HCT116 (cell line): ENCODE measurements at regions of chr20 and their contacts with region 1.

Region 1: DNA sequence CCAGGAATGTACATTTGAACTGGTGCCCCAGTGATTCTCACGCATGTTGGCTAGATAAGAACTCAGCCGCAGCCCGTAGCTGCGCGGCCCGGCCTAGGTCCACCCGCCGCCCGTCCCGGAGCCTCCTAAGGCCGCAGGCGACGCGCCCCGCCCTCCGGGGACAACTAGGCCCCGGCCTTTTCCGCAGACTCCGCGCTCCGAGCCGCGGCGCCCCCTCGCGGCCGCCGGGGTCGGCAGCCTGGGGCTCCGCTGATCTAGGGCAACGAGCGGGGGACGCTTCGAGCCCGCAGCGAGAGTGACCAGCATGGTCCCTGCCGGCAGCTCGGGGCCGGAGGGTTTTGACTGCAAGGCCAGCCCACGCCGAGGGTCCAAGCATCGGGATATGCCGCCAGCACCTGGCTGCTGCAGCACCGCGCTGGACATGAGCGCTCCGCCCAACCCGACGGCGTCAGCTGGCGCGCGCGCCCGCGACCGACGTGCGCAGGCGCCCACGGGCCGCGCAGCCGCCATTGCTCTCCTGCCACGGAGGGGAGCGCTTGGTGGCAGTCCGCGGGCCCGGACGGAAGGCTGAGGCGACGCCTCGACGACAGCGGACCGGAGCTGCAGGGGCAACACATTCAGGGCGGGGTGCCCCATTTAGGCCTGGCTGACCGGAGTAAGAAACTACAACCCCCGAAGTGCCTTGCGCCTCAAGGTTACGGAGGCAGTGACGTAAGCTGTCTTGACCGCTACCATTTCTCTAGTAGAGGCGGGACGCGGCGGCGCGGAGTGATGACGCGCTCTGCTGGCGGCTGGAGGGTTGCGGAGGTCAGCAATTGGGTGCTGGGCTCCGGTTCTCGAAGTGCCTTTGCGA is at the start of gene AP5S1:
- DNase-seq: peak; percentile 97
- ATAC-seq: peak; percentile 82
- H3K4me3 ChIP-seq: peak within 1 kb of the TSS; percentile 70 to 82
- H3K27ac ChIP-seq: peak within 1 kb of the TSS; percentile 87
- H3K4me1 ChIP-seq: peaks cover 23 to 46% of the 10 kb centered on the region in 2 experiments
- H3K27me3 ChIP-seq: no peaks in the 10 kb centered on the region
- CTCF ChIP-seq: peak in 2 of 3 experiments; percentile 91 to 98; a peak in 4 of 6 replicates
- POLR2A ChIP-seq: peak; percentile 38
- RAD21 ChIP-seq: no peak
- total RNA-seq, gene AP5S1: 12.1 TPM

Region 2: GRCh38 chr20:3358676-3359340 is 461.5 kb before region 1 on chr20:
- CTCF ChIA-PET with region 1: no interaction called
- POLR2A ChIA-PET with region 1: no interaction called
- RAD21 ChIA-PET with region 1: no interaction called
- intact Hi-C with region 1: no loop called
- DNase-seq: no peak
- ATAC-seq: no peak
- H3K4me3 ChIP-seq: no peak overlapping the region
- H3K27ac ChIP-seq: no peak overlapping the region
- H3K4me1 ChIP-seq: no peaks in the 10 kb centered on the region
- H3K27me3 ChIP-seq: no peaks in the 10 kb centered on the region
- CTCF ChIP-seq: no peak
- POLR2A ChIP-seq: no peak
- RAD21 ChIP-seq: peak; percentile 19; the same call in 1 of the 2 replicates

Region 3: GRCh38 chr20:3767427-3768341 is 52.6 kb before region 1 on chr20 and contains the start of gene ADISSP:
- CTCF ChIA-PET with region 1: interaction called, 12 read pairs
- POLR2A ChIA-PET with region 1: interaction called, 3 read pairs
- RAD21 ChIA-PET with region 1: no interaction called
- intact Hi-C with region 1: no loop called
- DNase-seq: peak; percentile 95
- ATAC-seq: peak; percentile 92
- H3K4me3 ChIP-seq: peak within 1 kb of the TSS; percentile 84 to 91
- H3K27ac ChIP-seq: peak within 1 kb of the TSS; percentile 83
- H3K4me1 ChIP-seq: peaks cover 12 to 36% of the 10 kb centered on the region in 2 experiments
- H3K27me3 ChIP-seq: no peaks in the 10 kb centered on the region
- CTCF ChIP-seq: peak in 2 of 3 experiments; percentile 8 to 26; a peak in 2 of 6 replicates
- POLR2A ChIP-seq: peak; percentile 31
- RAD21 ChIP-seq: no peak
- total RNA-seq, gene ADISSP: 99.4 TPM

Region 4: DNA sequence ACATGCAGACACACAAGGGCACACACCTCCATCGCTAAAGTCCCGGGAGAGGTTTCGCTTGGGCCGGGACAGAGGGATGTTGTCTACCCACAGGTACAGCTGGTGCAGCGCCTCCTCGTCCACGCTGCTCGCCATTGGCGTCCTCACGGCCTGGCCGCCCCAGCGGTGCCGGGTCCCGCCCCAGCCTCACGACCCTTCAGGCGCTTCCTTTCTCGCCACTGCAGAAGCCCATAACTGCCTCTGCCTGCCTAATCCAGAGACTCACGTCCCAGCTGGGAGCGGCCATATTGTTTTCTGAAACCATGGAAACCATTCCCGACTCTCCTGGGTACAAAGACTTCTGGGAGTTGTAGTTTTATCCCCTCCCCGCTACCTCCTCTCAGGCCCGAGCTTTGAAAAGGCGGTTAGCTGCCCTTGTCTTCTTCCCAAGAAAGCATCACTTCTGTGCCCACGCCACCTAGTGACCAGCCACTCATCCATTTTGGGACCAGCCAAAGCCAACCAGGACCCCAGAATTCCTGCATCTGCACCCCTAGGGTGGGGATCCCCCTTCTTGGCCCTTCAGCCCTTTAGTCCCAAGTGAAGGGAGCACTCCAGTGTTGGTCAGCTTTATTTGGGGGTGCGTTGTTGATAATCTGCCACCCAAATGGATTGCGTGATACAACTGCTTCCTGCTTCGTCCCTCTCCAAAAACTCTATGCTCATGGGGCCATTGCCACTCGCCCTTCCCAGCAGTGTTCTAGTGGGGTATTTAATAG is 38.9 kb before region 1 on chr20 and contains the start of gene SPEF1:
- CTCF ChIA-PET with region 1: interaction called, 19 read pairs
- POLR2A ChIA-PET with region 1: interaction called, 16 read pairs
- RAD21 ChIA-PET with region 1: interaction called in 1 of 2 experiments, 6 read pairs
- intact Hi-C with region 1: no loop called
- DNase-seq: peak; percentile 92
- ATAC-seq: peak; percentile 90
- H3K4me3 ChIP-seq: peak within 1 kb of the TSS; percentile 55 to 64
- H3K27ac ChIP-seq: peak within 1 kb of the TSS; percentile 3; the same call in 1 of the 2 replicates
- H3K4me1 ChIP-seq: peaks cover 7 to 27% of the 10 kb centered on the region in 2 experiments; a peak in 3 of 4 replicates
- H3K27me3 ChIP-seq: no peaks in the 10 kb centered on the region
- CTCF ChIP-seq: peak; percentile 63 to 83 (median 69)
- POLR2A ChIP-seq: no peak
- RAD21 ChIP-seq: peak; percentile 66
- total RNA-seq, gene SPEF1: 0.93 TPM

Region 5: DNA sequence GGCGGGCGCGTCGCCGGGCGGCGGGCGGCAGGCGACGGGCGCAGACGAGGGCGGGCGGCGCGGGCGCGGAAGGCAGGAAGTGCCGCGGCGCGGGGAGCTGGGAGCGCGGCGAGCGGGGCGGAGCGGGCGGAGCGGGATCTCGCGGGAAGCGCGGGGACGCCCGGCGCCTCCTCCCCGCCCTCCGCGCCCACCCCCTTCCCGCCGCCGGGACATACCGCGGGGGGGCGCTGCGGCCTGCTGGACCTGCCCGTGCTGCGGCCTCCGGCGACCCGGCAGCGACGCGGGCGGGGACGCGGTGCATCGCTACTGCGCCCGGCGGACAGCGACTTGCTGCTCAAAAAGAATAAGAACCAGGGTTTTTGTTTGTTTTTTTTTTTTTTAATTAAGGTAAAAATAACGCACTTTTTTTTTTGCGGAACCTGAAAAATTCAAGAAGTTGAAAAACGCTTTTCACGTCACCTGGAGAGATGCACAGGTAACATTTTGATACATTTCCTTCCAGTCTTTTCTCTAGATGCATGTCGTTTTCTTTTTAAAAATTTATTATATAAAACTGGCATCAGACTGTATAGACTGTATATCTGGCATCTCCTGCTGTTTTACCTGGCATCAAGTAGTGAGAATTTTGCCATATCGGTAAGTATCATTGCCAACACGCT is 33.5 kb before region 1 on chr20 and contains the start of gene CENPB:
- CTCF ChIA-PET with region 1: interaction called, 19 read pairs
- POLR2A ChIA-PET with region 1: interaction called, 16 read pairs
- RAD21 ChIA-PET with region 1: interaction called, 6 to 7 read pairs
- intact Hi-C with region 1: loop called (anchors 1 kb)
- DNase-seq: peak; percentile 57
- ATAC-seq: peak; percentile 88
- H3K4me3 ChIP-seq: peak within 1 kb of the TSS; percentile 68 to 70
- H3K27ac ChIP-seq: peak within 1 kb of the TSS; percentile 81
- H3K4me1 ChIP-seq: peaks cover 25 to 40% of the 10 kb centered on the region in 2 experiments
- H3K27me3 ChIP-seq: no peaks in the 10 kb centered on the region
- CTCF ChIP-seq: peak; percentile 58 to 91 (median 67)
- POLR2A ChIP-seq: no peak
- RAD21 ChIP-seq: peak; percentile 84
- total RNA-seq, gene CENPB: 67.2 TPM

Region 6: GRCh38 chr20:3795511-3796468 is 24.5 kb before region 1 on chr20 and contains the start of gene CDC25B:
- CTCF ChIA-PET with region 1: interaction called, 9 read pairs
- POLR2A ChIA-PET with region 1: interaction called, 12 read pairs
- RAD21 ChIA-PET with region 1: interaction called in 1 of 2 experiments, 3 read pairs
- intact Hi-C with region 1: no loop called
- DNase-seq: peak; percentile 84
- ATAC-seq: peak; percentile 80
- H3K4me3 ChIP-seq: peak within 1 kb of the TSS; percentile 66 to 80
- H3K27ac ChIP-seq: peak within 1 kb of the TSS; percentile 97
- H3K4me1 ChIP-seq: peaks cover 25 to 51% of the 10 kb centered on the region in 2 experiments
- H3K27me3 ChIP-seq: no peaks in the 10 kb centered on the region
- CTCF ChIP-seq: peak in 2 of 3 experiments; percentile 29 to 53; a peak in 3 of 6 replicates
- POLR2A ChIP-seq: peak; percentile 47
- RAD21 ChIP-seq: 0 out of 2 replicates have a peak, but pooled peaks have one; percentile 17
- total RNA-seq, gene CDC25B: 223 TPM

Region 7: DNA sequence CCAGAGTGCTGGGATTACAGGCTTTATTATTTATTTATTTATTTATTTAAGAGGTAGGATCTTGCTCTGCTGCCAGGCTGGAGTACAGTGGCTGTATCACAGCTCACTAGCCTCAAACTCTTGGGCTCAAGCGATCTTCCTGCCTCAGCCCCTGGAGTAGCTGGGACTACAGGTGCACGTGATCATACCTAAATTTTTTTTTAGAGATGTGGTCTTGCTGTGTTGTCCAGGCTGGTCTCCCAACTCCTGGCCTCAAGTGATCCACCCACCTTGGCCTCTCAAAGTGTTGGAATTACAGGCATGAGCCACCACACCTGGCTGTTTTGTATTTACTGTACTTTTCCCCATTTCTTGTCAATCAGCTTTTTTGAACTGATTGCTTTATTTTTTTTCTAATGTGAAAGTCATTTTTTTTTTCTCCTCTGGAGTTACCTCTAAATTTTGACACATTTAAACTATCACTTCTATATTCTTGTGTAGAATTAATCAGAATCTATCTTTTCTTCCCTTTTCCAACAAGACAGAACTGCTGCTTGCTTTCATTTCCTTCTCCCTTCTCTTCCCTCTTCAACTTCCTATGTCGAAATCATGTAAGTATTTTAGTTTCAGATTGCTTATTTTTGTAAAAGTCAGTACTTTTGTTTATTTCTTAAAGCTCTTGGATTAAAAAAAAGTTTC is 80.9 kb after region 1 on chr20:
- CTCF ChIA-PET with region 1: no interaction called
- POLR2A ChIA-PET with region 1: no interaction called
- RAD21 ChIA-PET with region 1: no interaction called
- intact Hi-C with region 1: no loop called
- DNase-seq: no peak
- ATAC-seq: no peak
- H3K4me3 ChIP-seq: no peak overlapping the region
- H3K27ac ChIP-seq: no peak overlapping the region
- H3K4me1 ChIP-seq: peaks cover 30 to 63% of the 10 kb centered on the region in 2 experiments
- H3K27me3 ChIP-seq: no peaks in the 10 kb centered on the region
- CTCF ChIP-seq: no peak
- POLR2A ChIP-seq: no peak
- RAD21 ChIP-seq: no peak

Region 8: GRCh38 chr20:4025125-4025524 is 204.9 kb after region 1 on chr20:
- CTCF ChIA-PET with region 1: no interaction called
- POLR2A ChIA-PET with region 1: no interaction called
- RAD21 ChIA-PET with region 1: interaction called in 1 of 2 experiments, 10 read pairs
- intact Hi-C with region 1: no loop called
- DNase-seq: no peak
- ATAC-seq: no peak
- H3K4me3 ChIP-seq: no peak overlapping the region
- H3K27ac ChIP-seq: no peak overlapping the region
- H3K4me1 ChIP-seq: no peaks in the 10 kb centered on the region
- H3K27me3 ChIP-seq: peaks cover 17% of the 10 kb centered on the region; the same call in 1 of the 2 replicates
- CTCF ChIP-seq: no peak
- POLR2A ChIP-seq: no peak
- RAD21 ChIP-seq: no peak